ENCODE measurements at regions of chr20 and their contacts with region 1.

Region 1: GRCh38 chr20:38007526-38007925 is 25.7 kb downstream of the TTI1 start:
- DNase-seq: no peak
- H3K4me3 ChIP-seq: no peak overlapping the region
- H3K27me3 ChIP-seq: no peaks in the 10 kb centered on the region
- CTCF ChIP-seq: no peak

Region 2: DNA sequence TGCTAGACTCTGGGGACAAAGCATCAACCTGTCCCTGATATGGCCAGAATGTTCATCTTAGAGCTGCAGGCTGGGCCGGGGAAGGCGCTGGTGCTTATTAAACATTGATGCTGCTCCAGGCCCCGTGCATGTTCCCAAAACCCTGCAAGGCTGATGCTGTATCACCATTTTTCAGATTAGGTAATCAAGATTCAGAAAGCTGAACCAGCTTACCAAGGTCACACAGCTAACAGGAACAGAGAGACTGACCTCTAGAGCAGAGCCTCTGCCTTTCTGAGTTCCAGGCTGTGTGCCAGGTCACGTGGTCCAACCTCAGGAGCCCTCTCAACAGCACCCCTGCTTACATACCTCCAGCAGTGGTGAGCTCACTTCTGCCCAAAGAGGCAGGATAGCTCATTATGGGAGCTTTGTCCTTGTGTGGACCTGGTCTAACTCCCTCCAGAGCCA is 120.7 kb before region 1 on chr20:
- CTCF ChIA-PET with region 1: no interaction called
- POLR2A ChIA-PET with region 1: no interaction called
- DNase-seq: no peak
- H3K4me3 ChIP-seq: no peak overlapping the region
- H3K27me3 ChIP-seq: peaks cover 14% of the 10 kb centered on the region
- CTCF ChIP-seq: no peak

Region 3: DNA sequence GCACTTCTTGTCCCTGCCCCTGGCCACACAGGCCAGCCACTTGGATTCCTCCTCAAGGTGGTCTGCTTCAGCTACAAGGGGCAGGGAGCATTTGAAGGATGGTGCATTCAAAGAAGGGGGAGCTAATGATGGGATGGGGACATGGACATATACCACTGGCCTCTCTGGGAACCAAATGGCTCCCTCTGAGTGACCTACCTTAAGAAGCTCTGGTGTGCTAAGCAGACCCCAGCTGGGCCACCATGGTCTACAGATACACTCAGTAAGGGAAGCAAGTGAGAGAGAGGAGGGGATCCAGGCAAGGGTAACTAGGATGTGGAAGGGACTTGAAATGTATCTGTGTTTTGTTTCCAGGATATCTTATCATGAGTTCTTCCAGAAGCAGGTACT is 36.7 kb before region 1 on chr20:
- CTCF ChIA-PET with region 1: no interaction called
- POLR2A ChIA-PET with region 1: interaction called, 12 read pairs
- DNase-seq: no peak
- H3K4me3 ChIP-seq: no peak overlapping the region
- H3K27me3 ChIP-seq: no peaks in the 10 kb centered on the region
- CTCF ChIP-seq: no peak

Region 4: DNA sequence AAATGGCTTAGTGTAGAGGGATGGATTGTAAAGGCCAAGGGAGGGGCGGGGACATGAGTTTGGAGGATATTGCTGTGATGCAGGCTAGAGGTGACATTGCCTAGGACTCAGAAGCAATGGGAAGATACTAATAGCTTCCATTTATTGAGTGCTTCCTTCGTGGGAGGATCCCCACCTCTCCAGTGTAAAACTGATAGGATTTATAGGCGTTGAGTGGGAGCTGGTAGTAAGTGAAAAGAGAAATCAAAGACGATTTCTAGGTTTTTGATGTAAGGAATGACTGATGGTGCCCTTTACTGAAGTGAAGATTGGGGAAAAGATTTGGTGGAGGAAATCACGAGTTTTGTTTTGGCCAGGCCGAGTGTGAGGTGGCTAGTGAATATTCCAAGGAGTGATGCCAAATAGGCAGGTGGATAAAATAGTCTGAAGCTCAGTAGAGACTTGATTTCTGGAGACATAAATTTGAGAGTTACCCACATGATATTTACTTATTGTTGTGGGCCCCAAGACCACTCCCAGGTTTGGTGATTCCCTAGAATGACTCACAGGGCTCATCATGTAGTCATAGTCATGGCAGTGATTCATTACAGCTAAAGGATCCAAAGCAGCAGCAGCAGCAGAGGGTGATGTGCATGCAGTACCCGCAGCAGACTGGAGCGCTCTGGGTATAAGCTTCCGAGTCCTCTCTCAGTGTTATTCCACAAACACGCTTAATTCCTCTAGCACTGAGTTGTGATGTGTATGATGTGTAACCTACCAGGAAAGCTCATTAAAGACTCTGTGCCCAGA is 36.2 kb after region 1 on chr20:
- CTCF ChIA-PET with region 1: no interaction called
- POLR2A ChIA-PET with region 1: interaction called, 14 read pairs
- DNase-seq: no peak
- H3K4me3 ChIP-seq: no peak overlapping the region
- H3K27me3 ChIP-seq: no peaks in the 10 kb centered on the region
- CTCF ChIP-seq: no peak